Ascending aorta (tissue), 2 donors: ENCODE measurements at regions of chr9 and their contacts with region 1.

Region 1: GRCh38 chr9:115157245-115157674 is 39.3 kb upstream of the TNC start:
- DNase-seq: peak in 1 of 2 donors; percentile 70
- H3K4me3 ChIP-seq: no peak overlapping the region
- H3K27ac ChIP-seq: peak overlapping the region; percentile 64 to 86
- H3K4me1 ChIP-seq: peaks cover 4 to 22% of the 10 kb centered on the region in 2 donors
- H3K27me3 ChIP-seq: no peaks in the 10 kb centered on the region
- CTCF ChIP-seq: no peak

Region 2: DNA sequence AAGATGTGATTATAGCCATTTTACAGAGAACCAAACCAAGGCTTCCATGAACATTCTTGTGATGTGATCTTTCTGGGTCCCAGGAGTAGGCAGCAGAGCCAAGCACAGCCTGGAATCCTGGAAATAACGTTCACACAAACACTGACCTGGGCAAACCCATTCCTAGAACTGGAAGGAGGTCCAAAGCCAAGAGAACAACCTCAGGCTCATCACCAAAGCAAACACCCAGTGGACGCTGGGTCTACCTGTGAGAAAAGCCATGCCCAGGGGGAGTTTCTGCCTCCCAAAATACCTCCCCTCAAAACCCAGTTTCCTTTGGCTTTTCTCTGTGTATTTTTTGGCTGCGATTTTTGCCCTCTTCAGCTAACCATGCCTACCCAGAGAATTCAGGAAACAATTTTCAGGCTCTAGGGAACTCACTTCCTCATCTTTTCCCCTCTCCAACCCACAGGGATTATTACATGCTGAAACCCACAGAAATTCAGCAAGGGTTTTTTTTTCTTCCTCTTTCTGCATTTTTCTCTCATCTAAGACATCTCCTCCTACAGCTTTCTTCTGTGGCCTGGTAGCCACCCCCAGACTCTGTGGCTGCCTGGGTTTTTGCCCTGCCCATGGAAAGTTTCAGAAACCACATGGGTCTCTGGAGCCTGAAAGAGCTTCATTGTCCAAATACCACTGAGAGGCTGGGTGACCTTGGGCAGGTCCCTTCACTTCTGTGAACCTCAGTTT is 114.3 kb before region 1 on chr9:
- intact Hi-C with region 1: loop called (anchors 2 kb)
- DNase-seq: peak; percentile 26 to 82
- H3K4me3 ChIP-seq: no peak overlapping the region
- H3K27ac ChIP-seq: peak overlapping the region; percentile 70 to 71
- H3K4me1 ChIP-seq: peaks cover 10 to 37% of the 10 kb centered on the region in 2 donors
- H3K27me3 ChIP-seq: no peaks in the 10 kb centered on the region
- CTCF ChIP-seq: no peak

Region 3: GRCh38 chr9:115063058-115063845 is 94.0 kb before region 1 on chr9:
- intact Hi-C with region 1: loop called (anchors 1 kb)
- DNase-seq: no peak
- H3K4me3 ChIP-seq: no peak overlapping the region
- H3K27ac ChIP-seq: peak overlapping the region; percentile 50 to 68
- H3K4me1 ChIP-seq: peaks cover 14 to 28% of the 10 kb centered on the region in 2 donors
- H3K27me3 ChIP-seq: no peaks in the 10 kb centered on the region
- CTCF ChIP-seq: no peak

Region 4: DNA sequence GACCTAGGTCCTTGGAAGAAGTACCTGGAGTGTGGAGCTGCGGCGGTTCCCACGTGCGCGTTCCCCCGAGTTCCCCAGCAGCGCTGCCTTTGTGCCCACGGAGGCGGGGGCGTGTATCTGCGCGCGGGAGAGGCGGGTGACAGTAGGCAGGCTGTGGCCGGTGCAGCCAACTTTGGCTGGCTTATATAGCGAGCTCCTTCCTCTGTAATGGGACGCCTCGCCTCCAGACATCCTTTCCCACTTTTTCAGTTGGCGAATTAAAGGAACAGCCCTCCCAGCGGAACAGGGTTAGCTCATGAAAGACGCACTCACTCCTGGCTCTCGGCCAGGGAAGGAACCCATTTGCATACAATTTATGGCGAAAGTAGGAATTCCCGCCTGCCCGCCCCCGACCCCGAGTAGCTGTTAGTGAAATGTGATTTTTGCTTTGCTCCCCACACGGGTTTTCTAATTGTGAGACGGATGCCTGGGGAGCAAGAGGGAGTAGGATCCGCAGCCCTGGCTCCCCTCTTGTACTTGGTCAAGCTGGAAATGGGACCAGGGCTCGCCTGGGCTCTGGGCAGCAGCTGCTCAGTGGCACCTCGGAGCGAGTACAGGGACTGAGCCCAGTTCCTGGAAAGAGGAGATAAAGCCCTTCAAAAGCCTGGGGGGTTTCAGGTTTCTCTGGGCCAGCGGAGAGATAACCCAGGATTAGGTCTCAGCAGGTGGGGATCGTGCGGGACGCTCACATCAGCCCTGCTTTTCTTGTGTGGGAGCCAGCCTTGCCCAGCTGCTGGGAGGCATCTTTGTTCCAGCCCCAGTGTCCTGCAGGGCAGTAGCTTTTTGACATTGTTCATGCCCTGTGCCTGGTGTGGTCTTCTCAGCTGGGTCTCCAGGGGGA is 39.0 kb before region 1 on chr9 and contains the start of gene TNC:
- intact Hi-C with region 1: loop called (anchors 2 kb)
- DNase-seq: peak; percentile 12 to 86
- H3K4me3 ChIP-seq: peak within 1 kb of the TSS; percentile 49 to 62
- H3K27ac ChIP-seq: peak within 1 kb of the TSS; percentile 66 to 74
- H3K4me1 ChIP-seq: peaks cover 0 to 11% of the 10 kb centered on the region in 2 donors
- H3K27me3 ChIP-seq: no peaks in the 10 kb centered on the region
- CTCF ChIP-seq: no peak
- total RNA-seq, gene TNC: 137 TPM

Region 5: DNA sequence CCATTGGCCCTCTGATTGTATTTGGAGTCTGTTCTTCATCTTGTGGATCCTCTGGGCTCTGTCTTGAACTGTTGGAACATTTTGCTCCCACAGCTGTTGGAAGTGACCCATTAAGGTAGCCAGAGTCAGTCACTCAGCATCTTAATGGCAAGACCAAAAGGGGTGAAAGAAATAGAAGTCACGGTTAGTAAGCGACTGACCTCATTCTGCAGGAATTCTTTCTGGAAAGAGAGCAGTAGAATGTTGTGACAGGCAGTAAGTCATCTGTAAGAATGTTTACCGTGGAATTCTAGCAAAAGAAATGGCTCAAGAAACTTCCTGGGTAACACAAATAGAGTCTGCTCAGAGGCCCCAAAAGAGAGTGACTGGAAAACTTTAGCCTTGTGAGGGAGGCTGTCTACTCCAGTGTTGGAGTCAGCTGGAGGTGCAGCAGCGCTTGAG is 10.7 kb before region 1 on chr9:
- intact Hi-C with region 1: loop called (anchors 1 kb)
- DNase-seq: peak in 1 of 2 donors; percentile 77
- H3K4me3 ChIP-seq: no peak overlapping the region
- H3K27ac ChIP-seq: peak overlapping the region; percentile 85 to 86
- H3K4me1 ChIP-seq: peaks cover 6 to 7% of the 10 kb centered on the region in 2 donors
- H3K27me3 ChIP-seq: no peaks in the 10 kb centered on the region
- CTCF ChIP-seq: no peak

Region 6: DNA sequence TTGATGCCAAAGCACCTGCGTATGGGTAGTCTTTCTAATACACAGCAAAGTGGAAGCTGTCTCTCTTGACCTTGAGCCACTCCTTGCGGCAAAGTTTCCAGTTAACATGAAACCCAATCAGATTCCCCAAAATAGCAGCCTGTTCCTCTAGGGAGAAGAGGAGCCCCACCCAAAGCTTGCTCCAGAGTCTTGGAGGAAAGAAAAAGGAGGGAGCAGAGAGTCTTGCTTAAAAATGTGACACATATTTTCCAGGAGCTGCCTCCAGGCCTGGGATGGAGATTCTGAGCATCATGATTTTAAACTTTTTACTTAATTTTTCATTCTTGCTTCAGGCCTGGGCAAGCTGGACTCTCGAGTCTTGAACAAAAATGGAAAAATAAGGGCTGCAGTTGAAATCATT is 184.2 kb after region 1 on chr9:
- intact Hi-C with region 1: loop called (anchors 5 kb)
- DNase-seq: peak in 1 of 2 donors; percentile 86
- H3K4me3 ChIP-seq: no peak overlapping the region
- H3K27ac ChIP-seq: peak overlapping the region; percentile 51 to 62
- H3K4me1 ChIP-seq: peaks cover 0 to 12% of the 10 kb centered on the region in 2 donors
- H3K27me3 ChIP-seq: no peaks in the 10 kb centered on the region
- CTCF ChIP-seq: no peak

Region 7: GRCh38 chr9:115481769-115482168 is 324.5 kb after region 1 on chr9:
- intact Hi-C with region 1: no loop called
- DNase-seq: no peak
- H3K4me3 ChIP-seq: no peak overlapping the region
- H3K27ac ChIP-seq: no peak overlapping the region
- H3K4me1 ChIP-seq: no peaks in the 10 kb centered on the region
- H3K27me3 ChIP-seq: no peaks in the 10 kb centered on the region
- CTCF ChIP-seq: no peak